GM12878 (cell line): ENCODE measurements at regions of chr4 and their contacts with region 1.

Region 1: DNA sequence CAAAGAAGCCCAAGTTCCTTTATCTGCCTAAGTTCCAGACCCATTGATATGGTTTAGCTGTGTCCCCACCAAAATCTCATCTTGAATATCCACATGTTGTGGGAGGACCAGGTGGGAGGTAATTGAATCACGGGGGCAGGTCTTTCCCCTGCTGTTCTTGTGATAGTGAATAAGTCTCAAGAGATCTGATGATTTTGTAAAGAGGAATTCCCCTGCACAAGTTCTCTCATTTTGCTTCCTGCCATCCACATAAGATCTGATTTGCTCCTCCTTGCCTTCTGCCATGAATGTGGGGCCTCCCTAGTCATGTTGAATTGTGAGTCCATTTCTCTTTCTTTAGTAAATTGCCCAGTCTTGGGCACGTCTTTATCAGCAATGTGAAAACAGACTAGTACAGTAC is 860.2 kb downstream of the FSTL5 start:
- DNase-seq: no peak
- ATAC-seq: peak; percentile 59
- H3K4me3 ChIP-seq: no peak overlapping the region
- H3K27ac ChIP-seq: no peak overlapping the region
- H3K4me1 ChIP-seq: no peaks in the 10 kb centered on the region
- H3K27me3 ChIP-seq: no peaks in the 10 kb centered on the region
- CTCF ChIP-seq: no peak
- EP300 ChIP-seq: no peak
- POLR2A ChIP-seq: no peak
- RAD21 ChIP-seq: no peak

Region 2: GRCh38 chr4:161287678-161288352 is 15.7 kb before region 1 on chr4:
- CTCF ChIA-PET with region 1: no interaction called
- POLR2A ChIA-PET with region 1: no interaction called
- RAD21 ChIA-PET with region 1: no interaction called
- SMC1A ChIA-PET with region 1: interaction called, 4 read pairs
- in situ Hi-C with region 1: no loop called
- intact Hi-C with region 1: loop called (anchors 2 kb)
- DNase-seq: peak; percentile 31
- ATAC-seq: peak; percentile 97
- H3K4me3 ChIP-seq: no peak overlapping the region
- H3K27ac ChIP-seq: no peak overlapping the region
- H3K4me1 ChIP-seq: no peaks in the 10 kb centered on the region
- H3K27me3 ChIP-seq: no peaks in the 10 kb centered on the region
- CTCF ChIP-seq: no peak
- EP300 ChIP-seq: no peak
- POLR2A ChIP-seq: no peak
- RAD21 ChIP-seq: no peak

Region 3: GRCh38 chr4:161404346-161405110 is 101.0 kb after region 1 on chr4:
- CTCF ChIA-PET with region 1: no interaction called
- POLR2A ChIA-PET with region 1: no interaction called
- RAD21 ChIA-PET with region 1: no interaction called
- SMC1A ChIA-PET with region 1: no interaction called
- in situ Hi-C with region 1: no loop called
- intact Hi-C with region 1: no loop called
- DNase-seq: no peak
- ATAC-seq: no peak
- H3K4me3 ChIP-seq: no peak overlapping the region
- H3K27ac ChIP-seq: no peak overlapping the region
- H3K4me1 ChIP-seq: no peaks in the 10 kb centered on the region
- H3K27me3 ChIP-seq: no peaks in the 10 kb centered on the region
- CTCF ChIP-seq: no peak
- EP300 ChIP-seq: no peak
- POLR2A ChIP-seq: no peak
- RAD21 ChIP-seq: no peak

Region 4: GRCh38 chr4:162149644-162150043 is 846.1 kb after region 1 on chr4:
- CTCF ChIA-PET with region 1: no interaction called
- POLR2A ChIA-PET with region 1: no interaction called
- RAD21 ChIA-PET with region 1: no interaction called
- SMC1A ChIA-PET with region 1: no interaction called
- in situ Hi-C with region 1: no loop called
- intact Hi-C with region 1: no loop called
- DNase-seq: no peak
- ATAC-seq: no peak
- H3K4me3 ChIP-seq: no peak overlapping the region
- H3K27ac ChIP-seq: no peak overlapping the region
- H3K4me1 ChIP-seq: no peaks in the 10 kb centered on the region
- H3K27me3 ChIP-seq: no peaks in the 10 kb centered on the region
- CTCF ChIP-seq: no peak
- EP300 ChIP-seq: no peak
- POLR2A ChIP-seq: no peak
- RAD21 ChIP-seq: no peak